ENCODE measurements at regions of chr6 and their contacts with region 1.

Region 1: DNA sequence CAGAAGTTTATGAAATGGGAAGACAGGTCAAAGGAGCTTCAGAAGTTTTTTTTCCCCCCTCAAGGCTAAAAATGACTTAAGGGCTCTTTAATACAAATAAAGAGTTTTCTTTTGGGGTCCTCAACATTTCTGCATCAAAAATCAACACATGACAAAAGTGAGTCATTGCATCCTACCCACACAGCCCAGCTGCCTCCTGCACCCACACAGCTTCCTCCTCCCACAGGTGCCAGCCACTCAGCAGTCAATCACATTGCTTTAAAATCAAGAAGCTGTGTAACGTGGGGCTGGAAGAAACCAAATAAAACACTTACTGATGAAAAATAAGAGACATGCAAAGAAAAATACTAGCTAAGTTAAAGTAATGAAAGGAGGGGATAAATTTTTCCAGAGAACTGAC is 68.5 kb downstream of the MAP3K5 start:
- DNase-seq: peak in 4 of 5 donors; percentile 9 to 49 (median 32)
- H3K4me3 ChIP-seq: no peak overlapping the region
- H3K4me3 Mint-ChIP-seq: peak overlapping the region in 5 of 8 donors; percentile 12 to 54 (median 39)
- H3K27ac ChIP-seq: no peak overlapping the region
- H3K27ac Mint-ChIP-seq: peak overlapping the region in 4 of 7 donors; percentile 28 to 54 (median 50)
- H3K4me1 ChIP-seq: peaks cover 37% of the 10 kb centered on the region
- H3K4me1 Mint-ChIP-seq: peaks cover 37 to 61% (median 45%) of the 10 kb centered on the region in 4 donors
- H3K27me3 ChIP-seq: no peaks in the 10 kb centered on the region
- H3K27me3 Mint-ChIP-seq: no peaks in the 10 kb centered on the region

Region 2: GRCh38 chr6:136737871-136738691 is 14.3 kb after region 1 on chr6:
- CTCF ChIA-PET with region 1: interaction called, 6 read pairs
- POLR2A ChIA-PET with region 1: interaction called, 3 read pairs
- intact Hi-C with region 1: loop called (anchors 2 kb)
- DNase-seq: no peak
- H3K4me3 ChIP-seq: no peak overlapping the region
- H3K4me3 Mint-ChIP-seq: no peak overlapping the region
- H3K27ac ChIP-seq: no peak overlapping the region
- H3K27ac Mint-ChIP-seq: peak overlapping the region in 1 of 7 donors; percentile 51
- H3K4me1 ChIP-seq: peaks cover 22% of the 10 kb centered on the region
- H3K4me1 Mint-ChIP-seq: peaks cover 33 to 68% (median 55%) of the 10 kb centered on the region in 4 donors
- H3K27me3 ChIP-seq: no peaks in the 10 kb centered on the region
- H3K27me3 Mint-ChIP-seq: no peaks in the 10 kb centered on the region

Region 3: GRCh38 chr6:136772685-136773472 is 49.1 kb after region 1 on chr6:
- CTCF ChIA-PET with region 1: no interaction called
- POLR2A ChIA-PET with region 1: no interaction called
- intact Hi-C with region 1: no loop called
- DNase-seq: no peak
- H3K4me3 ChIP-seq: no peak overlapping the region
- H3K4me3 Mint-ChIP-seq: peak overlapping the region in 4 of 8 donors; percentile 41 to 52 (median 46)
- H3K27ac ChIP-seq: no peak overlapping the region
- H3K27ac Mint-ChIP-seq: peak overlapping the region; percentile 23 to 91 (median 74)
- H3K4me1 ChIP-seq: peaks cover 71% of the 10 kb centered on the region
- H3K4me1 Mint-ChIP-seq: peaks cover 52 to 71% (median 60%) of the 10 kb centered on the region in 4 donors
- H3K27me3 ChIP-seq: no peaks in the 10 kb centered on the region
- H3K27me3 Mint-ChIP-seq: no peaks in the 10 kb centered on the region

Measured in CD4-positive, alpha-beta memory T cell (primary cell).